ENCODE measurements at regions of chr18 and their contacts with region 1.

Region 1: DNA sequence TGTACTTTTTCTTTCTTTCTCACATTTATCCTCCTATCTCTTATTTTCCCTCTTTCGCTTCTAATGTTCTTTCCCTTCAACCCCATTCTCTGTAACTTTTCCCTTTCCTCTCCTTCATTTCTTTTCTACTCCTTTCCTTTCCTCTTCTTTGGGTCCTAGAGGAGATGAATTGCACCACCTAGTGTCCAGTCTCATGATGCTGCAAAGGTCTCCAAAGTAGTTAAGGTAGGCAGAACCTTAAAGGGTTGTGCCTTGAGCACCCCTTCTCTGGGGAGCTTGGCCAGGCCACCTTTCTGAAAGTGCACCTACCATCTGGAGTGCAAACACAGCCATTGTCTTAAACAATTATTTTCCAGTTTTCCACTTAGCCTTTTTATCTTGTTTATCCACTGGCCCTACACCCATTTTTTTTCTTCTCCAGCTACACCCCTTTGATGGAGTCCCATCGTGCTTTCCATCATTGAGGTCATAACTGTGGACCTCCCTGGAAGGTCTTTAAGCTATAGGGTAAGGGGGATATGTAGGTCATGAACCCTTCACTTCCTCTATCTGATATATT is 156.0 kb downstream of the ESCO1 start:
- DNase-seq: peak; percentile 47
- ATAC-seq: peak; percentile 84
- H3K4me3 Mint-ChIP-seq: no peak overlapping the region
- H3K27ac Mint-ChIP-seq: no peak overlapping the region
- H3K4me1 Mint-ChIP-seq: peaks cover 7% of the 10 kb centered on the region; the same call in 1 of the 2 replicates
- H3K27me3 Mint-ChIP-seq: peaks cover 11% of the 10 kb centered on the region
- CTCF ChIP-seq: peak; percentile 45; the same call in 1 of the 2 replicates

Region 2: DNA sequence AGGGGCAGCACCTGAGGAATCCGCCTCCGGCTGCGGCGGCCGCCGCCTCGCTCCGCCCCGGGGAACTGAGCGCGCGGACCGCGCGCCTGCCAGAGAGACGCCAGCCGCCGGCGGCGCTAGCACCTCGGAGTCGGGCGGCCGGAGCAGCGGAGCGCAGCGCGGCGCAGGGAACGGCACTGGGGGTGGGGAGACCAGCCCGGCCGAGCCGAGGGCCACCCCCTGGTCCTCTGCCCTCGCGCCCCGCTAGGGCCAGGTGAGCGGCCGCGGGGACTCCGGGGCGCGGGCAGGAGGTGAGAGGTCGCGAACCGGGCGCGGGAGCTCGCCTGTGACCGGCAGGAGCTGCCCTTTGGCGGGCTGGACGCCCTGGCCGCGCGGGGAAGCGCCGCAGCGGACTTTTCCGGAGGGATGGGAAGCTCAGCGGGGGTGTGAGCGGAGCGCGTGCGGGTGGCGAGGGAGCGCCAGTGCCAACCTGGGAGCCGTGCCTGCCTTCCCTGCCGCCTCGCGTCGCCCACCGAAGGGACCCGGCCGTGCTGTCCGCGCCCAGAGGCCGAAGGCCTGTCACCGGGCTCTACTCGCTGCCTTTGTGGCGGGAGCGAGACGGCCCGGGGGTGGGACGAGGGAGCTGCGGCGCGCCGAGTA is 202.3 kb before region 1 on chr18 and contains the start of gene GREB1L:
- CTCF ChIA-PET with region 1: interaction called, 12 read pairs
- POLR2A ChIA-PET with region 1: no interaction called
- DNase-seq: peak; percentile 77
- ATAC-seq: peak; percentile 92
- H3K4me3 Mint-ChIP-seq: peak within 1 kb of the TSS; percentile 70
- H3K27ac Mint-ChIP-seq: no peak within 1 kb of the TSS
- H3K4me1 Mint-ChIP-seq: peaks cover 9% of the 10 kb centered on the region
- H3K27me3 Mint-ChIP-seq: peaks cover 94% of the 10 kb centered on the region
- CTCF ChIP-seq: no peak
- total RNA-seq, gene GREB1L: 0.02 to 0.26 TPM (median 0.11 TPM) in 3 replicates

Measured in WTC11 (cell line).